Breast epithelium (tissue), 4 donors: ENCODE measurements at regions of chr5 and their contacts with region 1.

Region 1: GRCh38 chr5:93359959-93360305 is 221.1 kb downstream of the NR2F1-AS1 start:
- DNase-seq: no peak
- H3K4me3 ChIP-seq: no peak overlapping the region
- H3K27ac ChIP-seq: peak overlapping the region in 1 of 2 donors; percentile 12
- H3K4me1 ChIP-seq: no peaks in the 10 kb centered on the region
- H3K27me3 ChIP-seq: no peaks in the 10 kb centered on the region
- CTCF ChIP-seq: no peak
- POLR2A ChIP-seq: no peak

Region 2: GRCh38 chr5:91670563-91670962 is 1689.4 kb before region 1 on chr5:
- intact Hi-C with region 1: loop called (anchors 5 kb)
- DNase-seq: no peak
- H3K4me3 ChIP-seq: no peak overlapping the region
- H3K27ac ChIP-seq: no peak overlapping the region
- H3K4me1 ChIP-seq: no peaks in the 10 kb centered on the region
- H3K27me3 ChIP-seq: no peaks in the 10 kb centered on the region
- CTCF ChIP-seq: no peak
- POLR2A ChIP-seq: no peak

Region 3: GRCh38 chr5:93330506-93330905 is 29.4 kb before region 1 on chr5:
- intact Hi-C with region 1: no loop called
- DNase-seq: no peak
- H3K4me3 ChIP-seq: no peak overlapping the region
- H3K27ac ChIP-seq: no peak overlapping the region
- H3K4me1 ChIP-seq: no peaks in the 10 kb centered on the region
- H3K27me3 ChIP-seq: no peaks in the 10 kb centered on the region
- CTCF ChIP-seq: no peak
- POLR2A ChIP-seq: no peak

Region 4: DNA sequence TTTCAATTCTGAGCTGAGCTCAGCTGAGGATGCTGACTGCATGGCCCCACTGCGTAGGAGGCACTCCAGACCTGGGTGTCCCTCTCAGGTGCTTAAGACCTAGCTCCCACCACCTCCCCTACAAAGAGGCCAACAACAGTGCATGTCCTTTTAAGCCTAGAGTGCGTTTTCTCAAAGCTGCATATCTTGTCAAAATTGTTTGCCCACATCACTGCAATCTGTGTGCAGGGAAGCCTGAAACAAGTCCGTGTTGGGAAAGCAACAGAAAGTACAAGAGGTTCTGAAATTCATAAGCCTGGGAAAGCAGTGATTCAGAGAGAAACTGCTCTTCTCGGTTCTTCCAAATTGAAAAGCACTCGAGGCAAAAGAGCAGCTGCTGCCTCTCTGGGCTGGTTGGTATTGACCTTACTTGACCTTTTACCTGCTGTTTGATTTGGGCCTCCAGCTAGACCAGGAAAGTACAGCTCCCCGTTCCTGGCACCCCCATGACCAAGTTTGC is 17.3 kb before region 1 on chr5:
- intact Hi-C with region 1: no loop called
- DNase-seq: no peak
- H3K4me3 ChIP-seq: no peak overlapping the region
- H3K27ac ChIP-seq: peak overlapping the region in 1 of 2 donors; percentile 52
- H3K4me1 ChIP-seq: no peaks in the 10 kb centered on the region
- H3K27me3 ChIP-seq: no peaks in the 10 kb centered on the region
- CTCF ChIP-seq: no peak
- POLR2A ChIP-seq: no peak

Region 5: GRCh38 chr5:93789173-93790070 is 429.5 kb after region 1 on chr5:
- intact Hi-C with region 1: loop called (anchors 10 kb)
- DNase-seq: no peak
- H3K4me3 ChIP-seq: no peak overlapping the region
- H3K27ac ChIP-seq: no peak overlapping the region
- H3K4me1 ChIP-seq: no peaks in the 10 kb centered on the region
- H3K27me3 ChIP-seq: no peaks in the 10 kb centered on the region
- CTCF ChIP-seq: no peak
- POLR2A ChIP-seq: no peak